ENCODE measurements at regions of chrX and their contacts with region 1.

Region 1: DNA sequence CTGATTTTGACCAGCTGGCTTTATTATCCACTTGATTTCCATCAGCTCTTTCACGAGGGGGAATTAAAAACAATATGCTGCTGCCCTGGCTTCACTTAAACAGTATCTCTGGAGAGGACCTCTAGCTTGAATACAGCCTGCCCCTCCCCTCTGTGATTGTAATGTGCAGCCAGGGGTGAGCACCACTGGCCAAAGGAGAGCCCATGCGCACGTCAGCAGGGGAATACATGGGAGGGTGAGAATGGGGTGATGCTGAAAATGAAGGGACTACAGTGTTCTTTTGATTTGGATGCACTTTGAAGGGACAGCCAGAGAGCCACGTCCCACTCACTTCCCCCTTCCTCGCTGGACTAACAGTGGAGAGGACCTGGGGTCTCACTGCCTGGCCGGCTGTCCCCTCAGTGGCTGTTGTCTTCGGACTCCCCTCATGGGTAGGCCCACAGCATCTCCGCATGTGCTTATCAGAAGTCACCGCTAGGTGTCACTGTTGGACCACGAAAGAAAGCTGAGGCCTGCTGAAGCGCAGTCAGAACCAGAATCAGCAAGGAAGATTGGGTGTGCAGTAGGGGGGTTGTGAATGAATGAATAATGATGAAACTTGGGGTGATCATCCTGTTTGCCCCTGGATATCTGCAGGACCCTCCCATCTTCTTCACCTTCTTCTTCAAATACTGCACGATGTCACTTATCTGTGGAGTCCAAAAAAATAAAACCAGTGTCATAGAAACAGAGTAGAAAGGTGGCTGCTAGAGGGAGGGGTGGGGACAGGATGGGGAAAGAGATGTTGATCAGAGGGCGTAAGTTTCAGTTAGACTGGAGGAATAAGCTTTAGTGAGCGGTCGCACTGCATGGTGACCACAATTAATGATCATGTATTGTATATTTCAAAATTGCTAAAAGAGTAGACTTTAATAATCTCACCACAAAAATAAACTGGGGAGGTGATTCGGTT is 32.8 kb downstream of the CLCN4 start:
- DNase-seq: peak; percentile 52 to 73 (median 66)
- H3K4me3 ChIP-seq: no peak overlapping the region
- H3K4me3 Mint-ChIP-seq: no peak overlapping the region
- H3K27ac ChIP-seq: no peak overlapping the region
- H3K27ac Mint-ChIP-seq: no peak overlapping the region
- H3K4me1 ChIP-seq: no peaks in the 10 kb centered on the region
- H3K4me1 Mint-ChIP-seq: peaks cover 0 to 4% (median 0%) of the 10 kb centered on the region in 4 donors
- H3K27me3 ChIP-seq: no peaks in the 10 kb centered on the region
- H3K27me3 Mint-ChIP-seq: peaks cover 2 to 8% of the 10 kb centered on the region in 2 donors

Region 2: GRCh38 chrX:10173316-10173900 is 16.2 kb before region 1 on chrX:
- CTCF ChIA-PET with region 1: interaction called, 10 read pairs
- POLR2A ChIA-PET with region 1: no interaction called
- intact Hi-C with region 1: no loop called
- DNase-seq: no peak
- H3K4me3 ChIP-seq: no peak overlapping the region
- H3K4me3 Mint-ChIP-seq: no peak overlapping the region
- H3K27ac ChIP-seq: no peak overlapping the region
- H3K27ac Mint-ChIP-seq: no peak overlapping the region
- H3K4me1 ChIP-seq: no peaks in the 10 kb centered on the region
- H3K4me1 Mint-ChIP-seq: peaks cover 0 to 1% (median 0%) of the 10 kb centered on the region in 4 donors
- H3K27me3 ChIP-seq: no peaks in the 10 kb centered on the region
- H3K27me3 Mint-ChIP-seq: peaks cover 3 to 6% of the 10 kb centered on the region in 2 donors

Region 3: GRCh38 chrX:10178866-10179463 is 10.6 kb before region 1 on chrX:
- CTCF ChIA-PET with region 1: interaction called, 19 read pairs
- POLR2A ChIA-PET with region 1: no interaction called
- intact Hi-C with region 1: no loop called
- DNase-seq: no peak
- H3K4me3 ChIP-seq: no peak overlapping the region
- H3K4me3 Mint-ChIP-seq: no peak overlapping the region
- H3K27ac ChIP-seq: no peak overlapping the region
- H3K27ac Mint-ChIP-seq: no peak overlapping the region
- H3K4me1 ChIP-seq: no peaks in the 10 kb centered on the region
- H3K4me1 Mint-ChIP-seq: no peaks in the 10 kb centered on the region
- H3K27me3 ChIP-seq: no peaks in the 10 kb centered on the region
- H3K27me3 Mint-ChIP-seq: peaks cover 1 to 10% of the 10 kb centered on the region in 2 donors

Region 4: DNA sequence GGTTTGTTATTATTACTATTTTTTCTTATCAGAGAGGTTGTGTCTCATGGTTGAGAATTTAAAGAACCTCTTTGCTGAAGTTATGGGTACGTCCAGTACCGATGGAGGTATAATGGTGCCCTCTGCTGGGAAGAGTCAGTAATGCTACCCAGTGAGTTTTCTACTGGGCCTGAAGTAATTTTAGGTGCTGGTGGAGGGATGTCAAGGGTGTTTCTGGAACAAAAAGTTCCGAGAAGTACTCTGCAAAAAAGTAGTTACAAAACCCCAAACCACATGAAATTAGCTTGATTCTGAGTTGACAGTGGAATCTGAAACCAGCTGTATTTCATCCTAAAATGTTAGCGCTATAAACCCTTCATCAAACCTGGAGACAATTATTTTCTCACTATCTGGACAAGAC is 533.3 kb after region 1 on chrX:
- CTCF ChIA-PET with region 1: interaction called, 32 read pairs
- POLR2A ChIA-PET with region 1: no interaction called
- intact Hi-C with region 1: no loop called
- DNase-seq: peak in 4 of 5 donors; percentile 6 to 23 (median 18)
- H3K4me3 ChIP-seq: no peak overlapping the region
- H3K4me3 Mint-ChIP-seq: no peak overlapping the region
- H3K27ac ChIP-seq: no peak overlapping the region
- H3K27ac Mint-ChIP-seq: no peak overlapping the region
- H3K4me1 ChIP-seq: no peaks in the 10 kb centered on the region
- H3K4me1 Mint-ChIP-seq: no peaks in the 10 kb centered on the region
- H3K27me3 ChIP-seq: no peaks in the 10 kb centered on the region
- H3K27me3 Mint-ChIP-seq: no peaks in the 10 kb centered on the region

Region 5: GRCh38 chrX:11137543-11138139 is 948.0 kb after region 1 on chrX:
- CTCF ChIA-PET with region 1: interaction called, 87 read pairs
- POLR2A ChIA-PET with region 1: no interaction called
- intact Hi-C with region 1: loop called (anchors 1 kb)
- DNase-seq: peak in 4 of 5 donors; percentile 25 to 40 (median 34)
- H3K4me3 ChIP-seq: no peak overlapping the region
- H3K4me3 Mint-ChIP-seq: no peak overlapping the region
- H3K27ac ChIP-seq: no peak overlapping the region
- H3K27ac Mint-ChIP-seq: no peak overlapping the region
- H3K4me1 ChIP-seq: no peaks in the 10 kb centered on the region
- H3K4me1 Mint-ChIP-seq: peaks cover 0 to 2% (median 0%) of the 10 kb centered on the region in 4 donors
- H3K27me3 ChIP-seq: no peaks in the 10 kb centered on the region
- H3K27me3 Mint-ChIP-seq: peaks cover 4 to 6% of the 10 kb centered on the region in 2 donors

Region 6: DNA sequence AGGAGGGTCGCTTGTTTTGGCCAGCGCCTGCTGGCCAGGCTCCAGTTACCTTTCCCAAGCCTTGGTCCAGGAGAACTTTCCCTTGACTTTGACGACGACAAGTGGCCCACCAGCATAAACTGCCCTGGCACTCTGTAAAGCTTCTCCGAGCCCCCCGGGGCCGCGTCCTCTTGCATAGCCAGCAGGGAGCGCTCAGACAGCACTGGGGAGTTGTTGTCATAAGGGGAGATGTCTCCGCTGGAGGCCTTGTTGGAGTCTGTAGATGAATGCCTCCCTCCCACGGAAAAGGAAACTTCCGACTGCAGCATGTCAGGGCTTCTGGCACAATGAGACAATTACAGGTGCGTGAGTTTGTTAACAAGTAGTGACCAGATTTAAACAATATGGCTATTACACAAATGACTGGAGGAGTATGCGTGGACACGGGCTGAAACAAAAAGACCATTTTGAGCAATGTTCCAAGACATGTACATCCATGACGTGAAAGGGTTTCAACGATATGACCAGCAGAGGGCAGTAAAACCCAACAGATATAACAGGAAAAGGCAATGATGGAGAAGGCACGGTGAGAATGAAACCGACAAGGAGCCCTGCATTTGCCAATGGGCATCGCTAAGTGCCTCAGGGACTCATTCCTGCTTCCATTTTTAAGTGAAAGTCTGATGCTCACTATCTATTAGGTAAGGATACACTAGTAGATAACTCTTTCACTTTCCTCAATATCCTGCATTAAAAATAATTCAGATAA is 954.5 kb after region 1 on chrX:
- CTCF ChIA-PET with region 1: interaction called, 87 read pairs
- POLR2A ChIA-PET with region 1: no interaction called
- intact Hi-C with region 1: loop called (anchors 2 kb)
- DNase-seq: peak; percentile 41 to 62 (median 58)
- H3K4me3 ChIP-seq: no peak overlapping the region
- H3K4me3 Mint-ChIP-seq: peak overlapping the region in 6 of 8 donors; percentile 36 to 78 (median 59)
- H3K27ac ChIP-seq: no peak overlapping the region
- H3K27ac Mint-ChIP-seq: no peak overlapping the region
- H3K4me1 ChIP-seq: no peaks in the 10 kb centered on the region
- H3K4me1 Mint-ChIP-seq: peaks cover 0 to 4% (median 3%) of the 10 kb centered on the region in 4 donors
- H3K27me3 ChIP-seq: no peaks in the 10 kb centered on the region
- H3K27me3 Mint-ChIP-seq: peaks cover 1 to 6% of the 10 kb centered on the region in 2 donors

Measured in CD4-positive, alpha-beta memory T cell (primary cell).